PC-9 (cell line): ENCODE measurements at regions of chr22 and their contacts with region 1.

Region 1: GRCh38 chr22:39839917-39840510 is 53.5 kb downstream of the ENTHD1 start:
- DNase-seq: no peak
- H3K4me3 ChIP-seq: no peak overlapping the region
- H3K27ac ChIP-seq: no peak overlapping the region
- H3K4me1 ChIP-seq: no peaks in the 10 kb centered on the region
- H3K27me3 ChIP-seq: peaks cover 26% of the 10 kb centered on the region; the same call in 1 of the 2 replicates
- CTCF ChIP-seq: no peak

Region 2: DNA sequence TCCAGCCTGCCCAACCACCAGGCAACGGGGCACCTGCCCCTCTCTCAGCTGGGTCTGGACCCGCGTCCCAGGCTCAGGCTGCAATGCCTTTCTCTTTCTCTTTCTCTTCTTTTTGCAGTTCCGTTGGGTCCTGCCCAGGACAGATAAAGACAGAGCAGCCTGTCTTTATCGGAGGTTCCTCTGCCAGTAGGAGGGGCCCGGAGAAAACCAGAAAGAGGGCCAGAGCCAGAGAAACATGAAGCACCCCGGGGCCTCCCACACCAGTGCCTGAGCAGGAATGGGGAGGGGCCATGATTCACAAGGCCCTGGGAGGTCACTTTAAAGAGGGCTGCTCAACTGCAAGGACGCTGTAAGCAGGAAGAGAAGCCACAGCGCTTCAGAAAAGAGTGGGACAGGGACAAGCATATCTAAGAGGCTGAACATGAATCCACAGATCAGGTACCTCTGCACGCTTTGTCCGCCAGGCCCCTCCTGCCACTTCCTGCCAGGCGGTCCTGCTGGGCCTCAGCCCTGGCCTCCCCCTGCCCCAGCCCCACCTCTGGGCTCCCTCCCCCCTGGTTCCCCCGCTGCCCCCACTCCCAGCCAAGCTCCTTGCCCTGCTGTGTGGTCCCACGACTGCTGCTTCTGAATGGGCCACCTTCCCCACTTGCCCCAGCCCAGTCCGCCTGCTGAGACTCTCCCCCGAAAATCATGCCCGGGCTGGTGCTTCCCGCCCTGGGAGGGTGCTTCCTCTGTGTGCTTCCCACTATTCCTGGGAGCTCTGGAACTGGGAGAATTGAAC is 825.9 kb before region 1 on chr22 and contains the start of gene APOBEC3C:
- CTCF ChIA-PET with region 1: interaction called, 13 read pairs
- POLR2A ChIA-PET with region 1: no interaction called
- intact Hi-C with region 1: no loop called
- DNase-seq: peak; percentile 89 to 92
- H3K4me3 ChIP-seq: peak within 1 kb of the TSS; percentile 77
- H3K27ac ChIP-seq: peak within 1 kb of the TSS; percentile 65
- H3K4me1 ChIP-seq: peaks cover 27% of the 10 kb centered on the region
- H3K27me3 ChIP-seq: no peaks in the 10 kb centered on the region
- CTCF ChIP-seq: peak; percentile 28; the same call in 1 of the 2 replicates
- total RNA-seq, gene APOBEC3C: 64.6 and 66.5 TPM in 2 replicates

Region 3: GRCh38 chr22:39773976-39774539 is 66.0 kb before region 1 on chr22:
- CTCF ChIA-PET with region 1: no interaction called
- POLR2A ChIA-PET with region 1: no interaction called
- intact Hi-C with region 1: no loop called
- DNase-seq: peak; percentile 40 to 71
- H3K4me3 ChIP-seq: no peak overlapping the region
- H3K27ac ChIP-seq: no peak overlapping the region
- H3K4me1 ChIP-seq: peaks cover 12% of the 10 kb centered on the region
- H3K27me3 ChIP-seq: peaks cover 28% of the 10 kb centered on the region
- CTCF ChIP-seq: no peak